Sigmoid colon (tissue), 7 donors: ENCODE measurements at regions of chr2 and their contacts with region 1.

Region 1: GRCh38 chr2:43595603-43596412 is at the start of gene THADA:
- DNase-seq: peak; percentile 100
- H3K4me3 ChIP-seq: peak within 1 kb of the TSS; percentile 63 to 85 (median 70)
- H3K27ac ChIP-seq: peak within 1 kb of the TSS; percentile 90 to 95 (median 92)
- H3K4me1 ChIP-seq: peaks cover 0 to 23% (median 16%) of the 10 kb centered on the region in 4 donors
- H3K27me3 ChIP-seq: no peaks in the 10 kb centered on the region
- CTCF ChIP-seq: no peak
- EP300 ChIP-seq: peak in 1 of 4 donors; percentile 22
- POLR2A ChIP-seq: peak; percentile 90 to 92
- total RNA-seq, gene THADA: 20.2 to 35.2 (median 29.6) TPM

Region 2: GRCh38 chr2:43745457-43745856 is 149.6 kb after region 1 on chr2:
- intact Hi-C with region 1: no loop called
- DNase-seq: no peak
- H3K4me3 ChIP-seq: no peak overlapping the region
- H3K27ac ChIP-seq: peak overlapping the region in 3 of 4 donors; percentile 36 to 67 (median 61)
- H3K4me1 ChIP-seq: peaks cover 0 to 20% (median 12%) of the 10 kb centered on the region in 4 donors
- H3K27me3 ChIP-seq: no peaks in the 10 kb centered on the region
- CTCF ChIP-seq: no peak
- EP300 ChIP-seq: no peak
- POLR2A ChIP-seq: no peak

Region 3: GRCh38 chr2:43995733-43996533 is 400.1 kb after region 1 on chr2 and contains the start of gene LRPPRC:
- intact Hi-C with region 1: loop called (anchors 5 kb)
- DNase-seq: peak; percentile 98
- H3K4me3 ChIP-seq: peak within 1 kb of the TSS; percentile 81 to 100 (median 98)
- H3K27ac ChIP-seq: peak within 1 kb of the TSS; percentile 85 to 90 (median 88)
- H3K4me1 ChIP-seq: peaks cover 0 to 31% (median 25%) of the 10 kb centered on the region in 4 donors
- H3K27me3 ChIP-seq: no peaks in the 10 kb centered on the region
- CTCF ChIP-seq: no peak
- EP300 ChIP-seq: peak in 1 of 4 donors; percentile 35
- POLR2A ChIP-seq: peak; percentile 45 to 70
- total RNA-seq, gene LRPPRC: 49.7 to 65.7 (median 55.8) TPM